GM10248 (cell line): ENCODE measurements at regions of chr1 and their contacts with region 1.

Region 1: DNA sequence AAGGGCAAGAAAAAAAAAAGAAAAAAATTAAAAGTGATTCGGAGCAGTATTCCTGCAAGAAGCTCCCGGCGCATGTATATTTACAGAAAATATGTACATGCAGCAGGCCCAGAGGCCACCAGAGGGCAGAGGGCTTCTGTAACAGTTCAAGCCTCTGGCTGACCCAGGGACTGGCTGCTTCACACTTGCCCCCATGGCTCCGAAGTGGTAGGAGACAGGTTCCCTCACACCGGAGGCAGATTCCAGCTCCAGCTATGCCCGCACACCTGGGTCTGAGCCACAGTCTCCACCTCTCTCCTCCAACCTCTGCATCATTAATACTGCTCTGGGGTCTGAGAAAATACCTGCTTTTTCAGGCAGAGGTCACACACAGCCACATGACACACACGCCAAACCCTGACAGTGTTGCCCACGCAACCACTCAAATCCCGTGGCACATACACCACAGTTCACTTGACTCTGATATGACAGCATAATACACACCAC is 2.2 kb upstream of the ARHGAP30 start:
- DNase-seq: peak; percentile 80
- CTCF ChIP-seq: peak; percentile 82

Region 2: GRCh38 chr1:161059293-161059692 is 12.6 kb before region 1 on chr1:
- CTCF ChIA-PET with region 1: interaction called, 42 read pairs
- POLR2A ChIA-PET with region 1: no interaction called
- DNase-seq: no peak
- CTCF ChIP-seq: no peak

Region 3: DNA sequence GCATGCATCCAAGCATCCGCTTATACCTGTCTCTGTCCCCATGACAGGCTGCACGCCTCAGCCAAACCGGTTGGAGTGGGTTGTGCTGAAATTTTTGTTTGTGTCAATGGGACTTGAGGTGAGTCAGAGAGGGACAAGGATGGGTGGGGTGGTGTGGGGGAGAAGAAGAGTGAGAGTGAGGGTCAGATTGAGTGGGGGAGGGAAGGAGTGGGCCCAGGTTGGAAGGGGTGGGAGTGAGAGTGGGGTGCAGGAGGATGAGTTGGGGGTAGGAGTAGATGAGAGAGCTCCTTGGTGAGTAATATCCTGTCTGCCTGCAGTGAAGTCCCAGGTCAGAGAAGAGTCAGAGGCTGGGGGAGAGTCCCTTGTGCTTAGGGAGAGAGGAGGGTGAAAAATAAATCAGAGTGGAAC is 20.7 kb after region 1 on chr1:
- CTCF ChIA-PET with region 1: interaction called, 137 read pairs
- POLR2A ChIA-PET with region 1: interaction called, 4 read pairs
- DNase-seq: peak; percentile 64
- CTCF ChIP-seq: no peak

Region 4: GRCh38 chr1:161111527-161111926 is 39.6 kb after region 1 on chr1:
- CTCF ChIA-PET with region 1: no interaction called
- POLR2A ChIA-PET with region 1: no interaction called
- DNase-seq: no peak
- CTCF ChIP-seq: no peak

Region 5: DNA sequence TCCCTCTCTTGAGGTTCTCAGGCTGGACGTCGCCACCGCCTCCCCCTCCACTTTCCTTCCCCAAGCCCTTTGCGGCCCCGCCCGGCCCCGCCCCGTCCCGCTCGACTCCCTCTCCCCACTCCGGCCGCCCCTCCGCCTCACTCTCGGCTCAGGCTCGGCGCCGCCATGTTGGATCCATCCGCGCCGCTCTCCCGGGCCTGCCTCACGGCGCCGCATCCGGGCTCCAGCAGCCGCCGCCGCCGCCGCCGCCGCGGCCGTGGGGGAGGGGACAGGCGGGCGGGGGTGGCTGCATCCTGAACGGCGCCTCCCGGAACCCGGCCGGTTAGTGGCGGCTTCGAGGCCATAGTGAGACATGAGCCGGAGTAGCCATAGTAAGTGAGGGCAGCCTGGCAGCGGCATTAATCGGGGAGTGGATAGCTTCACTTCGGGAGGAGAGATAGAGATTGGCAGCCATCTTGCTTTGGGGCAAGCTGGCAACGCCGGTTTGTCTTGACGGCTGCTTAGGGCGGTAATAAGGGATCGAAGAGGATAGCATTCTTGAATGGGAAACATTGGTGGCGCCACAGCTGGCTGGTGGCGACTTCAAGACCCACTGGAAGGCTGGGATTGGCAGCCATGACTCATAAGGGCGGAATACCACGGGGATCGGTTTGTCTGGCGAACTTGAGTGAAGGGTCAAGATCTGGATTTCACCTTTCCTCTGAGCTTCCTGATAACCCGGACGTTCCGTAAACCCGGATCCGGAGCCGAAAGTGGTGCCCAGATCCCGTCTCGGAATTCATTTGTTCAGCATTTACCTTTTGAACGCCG is 60.7 kb after region 1 on chr1 and contains the start of gene DEDD:
- CTCF ChIA-PET with region 1: interaction called, 71 read pairs
- POLR2A ChIA-PET with region 1: no interaction called
- DNase-seq: peak; percentile 93
- CTCF ChIP-seq: no peak